ENCODE measurements at regions of chr3 and their contacts with region 1.

Region 1: DNA sequence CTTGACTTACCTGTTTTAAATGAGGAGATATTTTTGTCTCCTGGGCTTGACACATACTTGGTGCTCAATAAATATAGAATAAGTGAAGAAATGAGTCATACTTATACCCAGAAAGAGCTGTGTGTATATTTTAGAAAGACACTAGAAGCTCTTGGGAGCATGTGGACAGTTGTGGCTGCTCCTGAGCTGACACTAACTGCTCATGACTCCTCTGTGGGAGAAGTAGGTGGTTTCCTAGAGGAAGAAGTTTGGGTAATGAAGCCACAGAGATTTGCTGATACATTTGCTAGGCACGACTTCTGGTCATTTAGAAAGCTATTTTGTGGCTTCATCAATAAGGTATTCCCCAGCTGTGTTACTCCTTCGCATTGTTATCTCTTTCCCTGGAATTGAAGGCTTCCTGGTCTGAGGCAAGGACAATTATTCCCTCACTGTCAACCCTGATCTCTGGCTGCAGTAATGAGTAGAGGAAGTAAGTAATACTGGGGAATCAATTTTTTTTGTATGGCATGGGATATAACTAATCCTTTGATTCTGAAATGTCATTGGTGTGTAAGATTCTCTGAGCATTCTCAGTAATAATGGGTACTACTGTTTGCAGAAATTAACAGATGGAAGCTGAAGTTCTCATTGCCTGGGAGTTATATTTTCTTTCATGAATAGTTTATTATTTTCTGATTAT is 79.6 kb upstream of the DCBLD2 start:
- DNase-seq: peak; percentile 77
- ATAC-seq: peak; percentile 22; the same call in 1 of the 2 replicates
- H3K4me3 ChIP-seq: peak overlapping the region; percentile 62
- H3K27ac ChIP-seq: peak overlapping the region; percentile 98
- H3K4me1 ChIP-seq: peaks cover 87% of the 10 kb centered on the region
- H3K27me3 ChIP-seq: no peaks in the 10 kb centered on the region
- CTCF ChIP-seq: no peak

Region 2: DNA sequence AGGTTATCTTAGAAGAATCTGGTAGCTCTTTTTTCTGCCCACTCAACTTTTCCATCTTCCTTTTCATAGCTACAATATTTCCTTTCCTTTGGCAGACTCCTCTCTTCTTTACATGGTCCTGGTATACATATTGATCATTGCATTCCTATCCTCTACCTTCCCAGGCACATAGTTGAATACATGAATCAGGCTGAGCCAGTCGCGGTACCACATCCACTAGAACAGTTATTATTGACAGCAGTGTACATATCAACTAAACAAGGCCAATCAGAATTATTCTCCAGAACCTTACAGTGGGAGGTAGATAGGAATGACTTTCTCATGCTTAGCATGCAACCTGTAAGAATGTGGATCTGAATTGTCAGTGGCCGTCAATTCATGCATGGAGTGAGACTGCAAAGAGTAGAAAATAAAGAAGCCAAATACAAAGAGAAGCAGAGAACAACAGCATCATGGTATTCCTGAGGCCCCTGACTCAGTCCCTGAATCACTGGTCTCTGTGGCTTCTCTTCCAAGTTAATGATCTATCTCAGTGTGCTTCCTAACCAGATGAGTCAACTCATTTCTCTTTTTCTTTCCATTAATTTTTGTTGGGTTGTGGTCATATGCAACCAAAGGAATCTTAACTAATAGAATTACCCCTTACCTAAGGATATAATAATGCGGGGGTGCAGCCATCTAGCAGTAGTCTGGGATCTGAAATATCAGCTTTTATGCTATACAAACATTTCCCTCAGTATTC is 18.7 kb before region 1 on chr3:
- CTCF ChIA-PET with region 1: no interaction called
- POLR2A ChIA-PET with region 1: interaction called, 3 read pairs
- intact Hi-C with region 1: loop called (anchors 2 kb)
- DNase-seq: peak; percentile 97
- ATAC-seq: peak; percentile 72
- H3K4me3 ChIP-seq: peak overlapping the region; percentile 64
- H3K27ac ChIP-seq: peak overlapping the region; percentile 97
- H3K4me1 ChIP-seq: peaks cover 78% of the 10 kb centered on the region
- H3K27me3 ChIP-seq: no peaks in the 10 kb centered on the region
- CTCF ChIP-seq: no peak

Region 3: DNA sequence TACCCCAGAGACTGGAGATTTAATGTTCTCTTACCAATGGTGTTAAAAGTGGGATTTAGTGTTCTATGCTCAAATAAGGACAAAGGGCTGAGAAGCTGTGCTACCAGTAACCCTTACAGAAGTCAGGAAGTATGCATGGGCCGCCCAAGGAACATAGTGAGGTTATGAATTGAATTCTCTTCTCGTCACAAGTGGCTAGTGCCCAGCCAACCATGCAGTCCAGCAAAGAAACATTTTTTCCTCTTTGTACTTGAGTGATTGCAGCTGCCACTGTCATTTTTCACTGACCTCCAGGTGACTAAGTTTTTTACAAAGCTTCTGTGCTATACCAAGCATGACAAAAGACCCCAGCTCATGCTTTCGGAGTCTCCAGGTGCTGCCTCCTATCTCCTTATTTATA is 31.0 kb after region 1 on chr3:
- CTCF ChIA-PET with region 1: no interaction called
- POLR2A ChIA-PET with region 1: no interaction called
- intact Hi-C with region 1: no loop called
- DNase-seq: no peak
- ATAC-seq: no peak
- H3K4me3 ChIP-seq: no peak overlapping the region
- H3K27ac ChIP-seq: no peak overlapping the region
- H3K4me1 ChIP-seq: peaks cover 16% of the 10 kb centered on the region
- H3K27me3 ChIP-seq: no peaks in the 10 kb centered on the region
- CTCF ChIP-seq: no peak

Measured in PC-3 (cell line).